Heart left ventricle (tissue), 16 donors: ENCODE measurements at regions of chr1 and their contacts with region 1.

Region 1: DNA sequence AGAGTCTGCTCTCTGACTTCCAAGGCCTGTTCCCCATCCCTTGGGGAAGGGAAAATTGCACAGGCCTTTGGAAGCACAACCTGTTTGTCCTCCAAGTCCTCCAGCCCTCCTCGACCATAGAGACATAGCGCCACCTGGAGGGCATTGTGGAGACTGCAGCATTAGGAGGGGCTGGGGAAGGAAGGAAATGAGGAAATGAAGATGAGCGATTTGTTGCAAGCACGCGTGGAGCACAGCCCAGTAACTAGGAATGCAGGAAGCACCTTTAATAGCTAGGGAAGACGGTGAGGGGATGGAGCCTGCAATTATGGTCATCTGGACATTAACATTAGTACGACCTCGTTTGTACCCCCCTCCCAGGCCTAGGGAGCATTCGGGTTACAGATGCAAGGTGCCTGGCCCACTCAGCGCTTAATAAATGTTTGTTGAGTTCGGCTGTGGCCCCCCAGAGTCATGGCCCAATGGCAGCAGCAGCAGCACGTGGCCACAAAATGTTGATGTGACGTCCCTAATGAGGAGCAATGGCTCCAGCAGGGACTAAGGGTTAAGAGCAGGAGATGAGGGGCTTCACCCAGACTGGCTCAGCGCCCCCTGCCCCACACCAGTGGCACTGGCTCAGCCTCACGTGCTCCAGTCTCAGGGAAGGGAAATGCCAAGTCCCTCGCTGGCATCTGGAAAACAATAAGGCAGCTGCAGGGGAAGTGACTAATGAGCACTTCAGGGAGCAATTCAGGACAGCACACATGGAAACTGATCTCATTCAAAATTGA is 8.0 kb upstream of the CAMK2N1 start:
- DNase-seq: peak; percentile 80 to 89 (median 84)
- ATAC-seq: peak; percentile 77 to 90 (median 83)
- H3K4me3 ChIP-seq: no peak overlapping the region
- H3K27ac ChIP-seq: peak overlapping the region in 7 of 12 donors; percentile 13 to 71 (median 47)
- H3K4me1 ChIP-seq: peaks cover 0 to 24% (median 14%) of the 10 kb centered on the region in 12 donors
- H3K27me3 ChIP-seq: peaks cover 0 to 6% (median 0%) of the 10 kb centered on the region in 9 donors
- CTCF ChIP-seq: peak; percentile 94 to 98 (median 95)
- POLR2A ChIP-seq: no peak

Region 2: DNA sequence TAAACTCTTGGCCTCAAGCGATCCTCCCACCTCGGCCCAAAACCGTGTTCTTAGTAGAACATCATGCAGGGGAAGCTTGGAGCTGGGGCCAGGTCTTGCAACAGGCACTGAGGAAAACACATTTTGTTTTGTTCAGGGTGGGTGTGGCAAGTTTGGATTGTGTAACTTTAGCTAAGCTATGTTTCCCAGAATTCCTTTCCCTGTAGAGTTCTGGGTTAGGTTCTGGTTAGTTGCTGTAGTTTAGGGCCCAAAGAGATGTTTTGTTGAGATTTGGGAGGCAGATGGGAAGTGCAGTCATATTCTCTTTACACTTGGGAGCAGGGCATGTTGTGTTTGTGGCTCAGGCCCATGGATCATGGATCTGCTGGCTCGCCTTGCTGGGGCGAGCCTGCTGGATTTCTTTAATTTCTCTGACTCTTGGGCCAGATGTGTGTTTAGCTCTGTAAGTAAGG is 400.1 kb before region 1 on chr1:
- intact Hi-C with region 1: loop called in 1 of 10 experiments (anchors 10 kb)
- DNase-seq: peak in 4 of 5 donors; percentile 39 to 85 (median 70)
- ATAC-seq: peak; percentile 74 to 91 (median 80)
- H3K4me3 ChIP-seq: no peak overlapping the region
- H3K27ac ChIP-seq: peak overlapping the region; percentile 18 to 85 (median 63)
- H3K4me1 ChIP-seq: peaks cover 0 to 16% (median 0%) of the 10 kb centered on the region in 12 donors
- H3K27me3 ChIP-seq: no peaks in the 10 kb centered on the region
- CTCF ChIP-seq: no peak
- POLR2A ChIP-seq: no peak

Region 3: DNA sequence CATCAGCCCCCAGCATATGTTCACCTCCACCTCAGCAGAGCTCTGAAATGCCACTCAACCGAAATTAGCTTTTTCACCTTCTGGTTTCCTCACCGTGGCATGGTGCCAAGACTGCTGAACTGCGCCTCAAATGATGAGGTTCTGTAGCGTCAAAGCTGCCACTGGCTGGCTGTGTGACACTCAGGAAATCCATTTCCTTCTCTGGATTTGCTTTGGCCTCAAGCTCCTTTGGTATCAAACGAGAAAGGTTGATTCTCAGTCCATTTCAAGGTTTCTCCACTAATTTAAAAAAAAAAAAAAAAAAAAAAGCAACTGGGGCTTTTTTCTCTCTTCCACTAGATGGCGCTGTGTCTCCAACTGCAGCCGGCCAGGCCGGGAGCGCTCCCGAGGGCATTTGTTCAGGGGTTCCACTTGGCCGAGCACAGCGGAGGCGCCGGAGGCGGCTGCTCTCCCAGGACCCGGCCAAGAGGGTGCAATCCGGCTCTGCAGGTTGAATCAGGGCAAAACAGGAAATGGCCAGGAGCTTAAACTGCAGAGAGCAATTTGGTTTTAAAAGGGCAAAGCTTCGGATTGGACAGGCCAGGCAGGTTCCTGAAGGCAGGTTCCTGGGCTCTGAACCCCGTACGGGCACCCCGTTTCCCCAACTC is 281.2 kb before region 1 on chr1:
- intact Hi-C with region 1: loop called (anchors 1 to 2 kb)
- DNase-seq: peak; percentile 44 to 83 (median 53)
- ATAC-seq: peak in 3 of 4 donors; percentile 66 to 83 (median 68)
- H3K4me3 ChIP-seq: no peak overlapping the region
- H3K27ac ChIP-seq: no peak overlapping the region
- H3K4me1 ChIP-seq: peaks cover 0 to 12% (median 6%) of the 10 kb centered on the region in 12 donors
- H3K27me3 ChIP-seq: peaks cover 0 to 23% (median 15%) of the 10 kb centered on the region in 9 donors
- CTCF ChIP-seq: peak; percentile 72 to 86 (median 78)
- POLR2A ChIP-seq: no peak

Region 4: GRCh38 chr1:20343149-20343937 is 150.7 kb before region 1 on chr1:
- intact Hi-C with region 1: no loop called
- DNase-seq: peak in 3 of 5 donors; percentile 29 to 63 (median 40)
- ATAC-seq: peak in 3 of 4 donors; percentile 43 to 86 (median 52)
- H3K4me3 ChIP-seq: peak overlapping the region in 9 of 12 donors; percentile 10 to 41 (median 26)
- H3K27ac ChIP-seq: no peak overlapping the region
- H3K4me1 ChIP-seq: peaks cover 0 to 11% (median 0%) of the 10 kb centered on the region in 12 donors
- H3K27me3 ChIP-seq: peaks cover 0 to 22% (median 5%) of the 10 kb centered on the region in 9 donors
- CTCF ChIP-seq: no peak
- POLR2A ChIP-seq: no peak

Region 5: GRCh38 chr1:20361806-20362640 is 132.0 kb before region 1 on chr1:
- intact Hi-C with region 1: loop called in 9 of 10 experiments (anchors 2 to 5 kb)
- DNase-seq: peak; percentile 52 to 83 (median 65)
- ATAC-seq: peak in 3 of 4 donors; percentile 27 to 40 (median 38)
- H3K4me3 ChIP-seq: no peak overlapping the region
- H3K27ac ChIP-seq: no peak overlapping the region
- H3K4me1 ChIP-seq: peaks cover 0 to 40% (median 13%) of the 10 kb centered on the region in 12 donors
- H3K27me3 ChIP-seq: peaks cover 6 to 49% (median 19%) of the 10 kb centered on the region in 9 donors
- CTCF ChIP-seq: peak; percentile 62 to 81 (median 72)
- POLR2A ChIP-seq: no peak

Region 6: GRCh38 chr1:20376880-20377494 is 117.0 kb before region 1 on chr1:
- intact Hi-C with region 1: loop called in 7 of 10 experiments (anchors 5 kb)
- DNase-seq: peak in 3 of 5 donors; percentile 33 to 78 (median 44)
- ATAC-seq: peak; percentile 32 to 71 (median 59)
- H3K4me3 ChIP-seq: no peak overlapping the region
- H3K27ac ChIP-seq: no peak overlapping the region
- H3K4me1 ChIP-seq: no peaks in the 10 kb centered on the region
- H3K27me3 ChIP-seq: peaks cover 0 to 52% (median 8%) of the 10 kb centered on the region in 9 donors
- CTCF ChIP-seq: peak; percentile 55 to 79 (median 70)
- POLR2A ChIP-seq: no peak

Region 7: GRCh38 chr1:20430355-20431175 is 63.5 kb before region 1 on chr1:
- intact Hi-C with region 1: no loop called
- DNase-seq: peak in 2 of 5 donors; percentile 31 to 72
- ATAC-seq: peak in 3 of 4 donors; percentile 44 to 58 (median 49)
- H3K4me3 ChIP-seq: no peak overlapping the region
- H3K27ac ChIP-seq: peak overlapping the region in 4 of 12 donors; percentile 33 to 53 (median 44)
- H3K4me1 ChIP-seq: peaks cover 0 to 3% (median 0%) of the 10 kb centered on the region in 12 donors
- H3K27me3 ChIP-seq: peaks cover 0 to 48% (median 15%) of the 10 kb centered on the region in 9 donors
- CTCF ChIP-seq: peak; percentile 38 to 64 (median 54)
- POLR2A ChIP-seq: no peak

Region 8: GRCh38 chr1:20540281-20540680 is 46.3 kb after region 1 on chr1:
- intact Hi-C with region 1: no loop called
- DNase-seq: no peak
- ATAC-seq: no peak
- H3K4me3 ChIP-seq: no peak overlapping the region
- H3K27ac ChIP-seq: no peak overlapping the region
- H3K4me1 ChIP-seq: no peaks in the 10 kb centered on the region
- H3K27me3 ChIP-seq: peaks cover 0 to 15% (median 0%) of the 10 kb centered on the region in 9 donors
- CTCF ChIP-seq: no peak
- POLR2A ChIP-seq: no peak